Panc1 (cell line): ENCODE measurements at regions of chr7 and their contacts with region 1.

Region 1: GRCh38 chr7:311796-312195 is 21.8 kb downstream of the FOXL3 start:
- DNase-seq: no peak
- ATAC-seq: peak; percentile 30; the same call in 1 of the 2 replicates
- H3K4me3 ChIP-seq: no peak overlapping the region
- H3K27ac ChIP-seq: no peak overlapping the region
- H3K4me1 ChIP-seq: no peaks in the 10 kb centered on the region
- H3K27me3 ChIP-seq: peaks cover 40% of the 10 kb centered on the region
- CTCF ChIP-seq: no peak

Region 2: DNA sequence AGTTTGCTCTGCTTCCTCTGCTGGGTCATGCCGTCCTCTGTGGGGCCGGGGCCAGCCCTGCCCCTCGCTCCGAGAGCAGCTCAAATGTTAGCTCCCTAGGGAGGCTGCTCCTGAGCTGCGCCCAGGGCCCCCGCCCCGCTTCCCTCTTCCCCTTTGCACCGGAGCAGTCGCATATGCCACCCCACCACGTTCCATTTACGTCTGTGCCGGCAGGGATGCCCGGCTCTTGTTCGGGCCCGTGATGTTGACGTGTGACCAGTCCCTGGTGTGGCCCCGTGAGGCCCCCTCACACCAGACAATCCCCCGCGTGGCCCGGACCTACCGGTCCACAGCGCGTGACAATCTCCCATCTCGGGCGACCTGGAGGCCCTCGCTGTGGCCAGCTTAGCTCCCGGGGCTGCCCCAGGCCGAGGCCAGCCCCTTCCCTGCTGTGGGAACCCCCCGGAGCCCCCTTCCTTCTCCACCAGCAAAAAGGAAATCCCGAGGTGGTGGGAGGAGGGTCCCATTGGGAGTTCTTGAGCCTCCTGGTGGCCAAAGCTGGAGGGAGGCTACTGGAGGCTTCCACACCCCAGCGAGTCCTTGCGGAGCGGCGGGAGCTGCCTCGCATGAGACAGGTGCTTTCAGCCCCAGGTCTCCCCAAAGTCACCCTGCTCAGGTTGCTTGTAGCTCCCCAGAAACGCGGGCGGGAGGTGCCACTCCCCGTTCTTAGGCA is 104.2 kb before region 1 on chr7:
- CTCF ChIA-PET with region 1: no interaction called
- POLR2A ChIA-PET with region 1: no interaction called
- in situ Hi-C with region 1: no loop called
- intact Hi-C with region 1: no loop called
- DNase-seq: no peak
- ATAC-seq: no peak
- H3K4me3 ChIP-seq: no peak overlapping the region
- H3K27ac ChIP-seq: no peak overlapping the region
- H3K4me1 ChIP-seq: no peaks in the 10 kb centered on the region
- H3K27me3 ChIP-seq: no peaks in the 10 kb centered on the region
- CTCF ChIP-seq: no peak

Region 3: GRCh38 chr7:916291-916941 is 604.6 kb after region 1 on chr7:
- CTCF ChIA-PET with region 1: interaction called, 12 read pairs
- POLR2A ChIA-PET with region 1: no interaction called
- in situ Hi-C with region 1: no loop called
- intact Hi-C with region 1: no loop called
- DNase-seq: no peak
- ATAC-seq: no peak
- H3K4me3 ChIP-seq: no peak overlapping the region
- H3K27ac ChIP-seq: no peak overlapping the region
- H3K4me1 ChIP-seq: peaks cover 18% of the 10 kb centered on the region
- H3K27me3 ChIP-seq: no peaks in the 10 kb centered on the region
- CTCF ChIP-seq: no peak